GM12878 (cell line): ENCODE measurements at regions of chr7 and their contacts with region 1.

Region 1: GRCh38 chr7:127838816-127839415 is 186.9 kb downstream of the SND1 start:
- DNase-seq: no peak
- ATAC-seq: no peak
- H3K4me3 ChIP-seq: no peak overlapping the region
- H3K27ac ChIP-seq: no peak overlapping the region
- H3K4me1 ChIP-seq: no peaks in the 10 kb centered on the region
- H3K27me3 ChIP-seq: no peaks in the 10 kb centered on the region
- CTCF ChIP-seq: no peak
- EP300 ChIP-seq: no peak
- POLR2A ChIP-seq: no peak
- RAD21 ChIP-seq: no peak

Region 2: GRCh38 chr7:127854383-127854782 is 15.5 kb after region 1 on chr7:
- CTCF ChIA-PET with region 1: interaction called, 3 read pairs
- POLR2A ChIA-PET with region 1: interaction called, 6 read pairs
- RAD21 ChIA-PET with region 1: no interaction called
- SMC1A ChIA-PET with region 1: interaction called, 12 read pairs
- in situ Hi-C with region 1: no loop called
- intact Hi-C with region 1: no loop called
- DNase-seq: no peak
- ATAC-seq: no peak
- H3K4me3 ChIP-seq: no peak overlapping the region
- H3K27ac ChIP-seq: no peak overlapping the region
- H3K4me1 ChIP-seq: peaks cover 36% of the 10 kb centered on the region
- H3K27me3 ChIP-seq: no peaks in the 10 kb centered on the region
- CTCF ChIP-seq: no peak
- EP300 ChIP-seq: no peak
- POLR2A ChIP-seq: no peak
- RAD21 ChIP-seq: no peak